Heart left ventricle (tissue), 16 donors: ENCODE measurements at regions of chr18 and their contacts with region 1.

Region 1: DNA sequence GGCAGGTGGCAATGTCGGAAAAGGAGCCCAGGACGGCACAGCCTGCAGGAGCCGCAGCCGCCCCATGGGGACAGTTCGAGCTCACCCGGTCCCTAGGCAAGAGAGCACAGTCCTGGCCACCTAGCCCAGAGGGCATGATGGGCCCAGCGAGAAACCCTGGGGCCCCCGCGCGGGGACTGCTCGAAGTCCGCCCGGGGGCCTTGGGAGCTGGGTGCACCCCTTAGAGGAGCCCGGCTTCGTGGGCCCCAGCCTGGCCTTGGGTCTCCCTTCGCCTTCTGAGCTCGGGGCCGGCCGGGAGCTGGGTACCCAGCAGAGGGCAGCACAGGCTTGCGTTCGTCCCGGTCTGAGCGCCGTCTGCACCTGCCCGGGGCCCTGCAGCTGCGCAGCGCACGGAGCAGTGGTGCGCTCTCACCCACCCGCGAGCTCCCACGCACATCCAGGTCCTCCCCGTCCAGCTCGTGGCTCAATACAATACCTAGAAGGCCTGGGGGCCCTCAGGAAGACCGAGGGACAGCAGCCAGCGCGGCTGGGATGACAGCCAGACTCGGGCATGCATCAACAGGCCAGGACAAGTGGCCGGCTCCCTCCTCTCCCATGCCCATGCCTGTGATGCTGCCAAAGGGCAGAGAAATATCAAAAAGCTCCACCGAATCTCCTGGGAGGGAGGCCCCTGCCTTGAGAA is 96.2 kb upstream of the ZNF532 start:
- DNase-seq: peak; percentile 69 to 89 (median 75)
- ATAC-seq: peak; percentile 65 to 95 (median 92)
- H3K4me3 ChIP-seq: peak overlapping the region in 9 of 12 donors; percentile 15 to 53 (median 35)
- H3K27ac ChIP-seq: peak overlapping the region in 3 of 12 donors; percentile 10 to 40 (median 37)
- H3K4me1 ChIP-seq: peaks cover 0 to 18% (median 10%) of the 10 kb centered on the region in 12 donors
- H3K27me3 ChIP-seq: peaks cover 0 to 4% (median 0%) of the 10 kb centered on the region in 9 donors
- CTCF ChIP-seq: peak; percentile 72 to 91 (median 81)
- POLR2A ChIP-seq: no peak

Region 2: DNA sequence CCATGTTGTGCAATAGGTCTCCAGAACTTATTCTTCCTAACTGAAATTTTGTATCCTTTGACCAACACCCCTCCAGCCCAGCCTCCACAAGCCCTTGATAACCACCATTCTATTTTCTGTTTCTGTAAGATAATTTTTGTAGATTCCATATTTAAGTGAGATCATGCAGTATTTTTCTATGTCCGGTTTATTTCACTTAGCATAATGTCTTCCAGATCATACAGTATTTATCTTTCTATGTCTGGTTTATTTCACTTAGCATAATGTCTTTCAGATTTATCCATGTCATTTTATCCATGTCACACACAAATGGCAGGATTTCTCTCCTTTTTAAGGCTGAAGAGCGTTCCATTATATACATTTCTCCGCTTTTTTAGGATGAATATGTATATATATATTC is 1357.7 kb before region 1 on chr18:
- intact Hi-C with region 1: no loop called
- DNase-seq: no peak
- ATAC-seq: no peak
- H3K4me3 ChIP-seq: no peak overlapping the region
- H3K27ac ChIP-seq: no peak overlapping the region
- H3K4me1 ChIP-seq: no peaks in the 10 kb centered on the region
- H3K27me3 ChIP-seq: peaks cover 0 to 31% (median 0%) of the 10 kb centered on the region in 9 donors
- CTCF ChIP-seq: no peak
- POLR2A ChIP-seq: no peak

Region 3: DNA sequence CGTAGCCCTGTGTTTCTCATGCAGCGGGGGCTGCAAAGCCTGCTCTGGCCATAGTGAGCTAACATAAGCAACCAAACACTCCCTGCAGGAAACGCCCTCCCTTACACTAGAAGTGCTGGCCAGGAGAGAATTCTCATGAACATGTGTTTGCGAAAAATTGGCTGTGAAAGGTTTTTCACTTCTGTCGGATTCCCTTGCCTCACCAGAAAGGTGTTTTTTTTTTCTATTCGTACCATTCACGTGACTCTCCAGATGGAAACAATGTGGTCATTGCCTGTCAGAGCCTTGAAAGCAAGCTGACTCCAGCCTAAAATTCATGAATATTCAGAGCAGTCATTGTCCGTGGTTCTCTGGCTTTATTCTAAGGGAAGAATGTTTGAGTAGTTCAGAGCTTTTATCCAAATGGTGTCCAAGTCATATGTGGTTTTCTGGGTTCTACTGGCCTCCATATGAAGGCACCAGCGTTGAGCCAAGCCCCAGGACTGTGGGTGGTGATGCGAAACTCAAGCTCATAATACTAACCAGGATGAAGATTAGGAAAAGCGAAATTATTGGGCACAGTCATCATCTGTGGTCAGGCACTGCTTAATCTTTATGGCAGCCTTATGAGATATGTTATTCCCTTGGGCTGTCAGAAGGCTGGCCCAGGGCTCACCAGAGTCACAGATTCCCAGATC is 376.0 kb before region 1 on chr18:
- intact Hi-C with region 1: loop called in 1 of 10 experiments (anchors 10 kb)
- DNase-seq: no peak
- ATAC-seq: peak in 3 of 4 donors; percentile 36 to 60 (median 50)
- H3K4me3 ChIP-seq: no peak overlapping the region
- H3K27ac ChIP-seq: peak overlapping the region in 3 of 12 donors; percentile 16 to 74 (median 51)
- H3K4me1 ChIP-seq: peaks cover 0 to 25% (median 0%) of the 10 kb centered on the region in 12 donors
- H3K27me3 ChIP-seq: no peaks in the 10 kb centered on the region
- CTCF ChIP-seq: no peak
- POLR2A ChIP-seq: no peak

Region 4: DNA sequence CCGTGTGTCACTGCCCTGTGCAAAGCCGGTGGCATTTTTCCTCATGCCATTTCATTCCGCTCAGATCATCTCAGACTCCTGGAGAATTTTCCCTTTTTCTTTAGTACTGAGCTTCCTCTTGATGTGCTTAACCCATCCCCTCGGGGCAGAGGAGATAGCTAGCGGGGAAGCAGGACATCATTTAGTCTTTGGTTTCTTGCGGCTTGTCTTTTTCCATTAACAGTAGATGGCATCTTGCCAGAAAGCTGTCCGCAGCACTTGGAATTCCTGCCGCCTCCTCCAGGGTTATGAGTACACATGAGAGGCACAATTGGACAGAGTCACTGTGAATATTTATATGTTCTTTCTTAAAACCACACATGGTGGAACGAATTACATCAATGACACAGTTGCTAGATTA is 366.2 kb before region 1 on chr18:
- intact Hi-C with region 1: loop called in 4 of 10 experiments (anchors 5 to 10 kb)
- DNase-seq: peak in 1 of 5 donors; percentile 33
- ATAC-seq: peak in 2 of 4 donors; percentile 20 to 45
- H3K4me3 ChIP-seq: no peak overlapping the region
- H3K27ac ChIP-seq: peak overlapping the region in 1 of 12 donors; percentile 56
- H3K4me1 ChIP-seq: peaks cover 0 to 22% (median 9%) of the 10 kb centered on the region in 12 donors
- H3K27me3 ChIP-seq: no peaks in the 10 kb centered on the region
- CTCF ChIP-seq: no peak
- POLR2A ChIP-seq: no peak

Region 5: GRCh38 chr18:58605027-58606020 is 163.1 kb before region 1 on chr18:
- intact Hi-C with region 1: no loop called
- DNase-seq: no peak
- ATAC-seq: no peak
- H3K4me3 ChIP-seq: no peak overlapping the region
- H3K27ac ChIP-seq: no peak overlapping the region
- H3K4me1 ChIP-seq: peaks cover 0 to 23% (median 0%) of the 10 kb centered on the region in 12 donors
- H3K27me3 ChIP-seq: no peaks in the 10 kb centered on the region
- CTCF ChIP-seq: no peak
- POLR2A ChIP-seq: no peak

Region 6: GRCh38 chr18:59070181-59070912 is 301.9 kb after region 1 on chr18:
- intact Hi-C with region 1: loop called in 2 of 10 experiments (anchors 1 kb)
- DNase-seq: peak; percentile 82 to 87 (median 82)
- ATAC-seq: peak; percentile 70 to 91 (median 88)
- H3K4me3 ChIP-seq: no peak overlapping the region
- H3K27ac ChIP-seq: no peak overlapping the region
- H3K4me1 ChIP-seq: no peaks in the 10 kb centered on the region
- H3K27me3 ChIP-seq: no peaks in the 10 kb centered on the region
- CTCF ChIP-seq: peak; percentile 81 to 94 (median 86)
- POLR2A ChIP-seq: no peak